Adrenal gland (tissue), 19 donors: ENCODE measurements at regions of chr3 and their contacts with region 1.

Region 1: GRCh38 chr3:42961633-42962032 is 17.5 kb upstream of the GASK1A start:
- DNase-seq: peak; percentile 30 to 82 (median 50)
- H3K4me3 ChIP-seq: no peak overlapping the region
- H3K27ac ChIP-seq: no peak overlapping the region
- H3K4me1 ChIP-seq: no peaks in the 10 kb centered on the region
- H3K27me3 ChIP-seq: no peaks in the 10 kb centered on the region
- CTCF ChIP-seq: peak; percentile 49 to 81 (median 73)
- POLR2A ChIP-seq: no peak

Region 2: DNA sequence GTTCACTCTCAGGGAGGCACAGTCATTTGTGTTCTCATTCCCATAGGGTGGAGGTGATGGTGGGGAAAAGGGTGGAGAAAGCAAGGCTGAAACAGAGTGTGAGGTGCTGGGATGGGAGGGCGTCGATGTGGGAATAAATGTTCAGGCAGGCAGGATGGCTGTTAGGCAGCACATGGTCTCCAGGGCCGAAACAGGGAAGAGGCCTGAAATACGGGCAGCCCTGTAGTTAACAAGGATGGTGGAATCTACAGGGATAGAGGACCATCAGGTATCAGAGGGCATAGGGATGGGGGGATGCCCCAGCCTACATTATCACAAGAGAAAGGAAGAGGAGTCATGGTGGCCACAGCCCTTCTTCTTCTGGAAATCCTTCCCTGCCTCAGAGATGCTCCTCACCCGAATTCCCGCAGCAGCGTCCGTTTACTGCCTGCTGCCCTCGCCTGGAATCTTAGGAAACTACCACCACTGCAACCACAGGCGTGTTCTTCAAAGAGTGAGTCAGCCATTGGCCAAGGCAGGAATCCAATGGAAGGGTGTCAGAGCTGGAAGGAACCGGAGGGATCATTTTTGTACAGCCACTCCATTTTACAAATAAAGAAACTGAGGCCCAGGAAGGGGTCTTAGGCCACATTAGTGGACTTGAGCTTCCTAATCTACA is 194.0 kb after region 1 on chr3:
- intact Hi-C with region 1: loop called (anchors 5 kb)
- DNase-seq: peak; percentile 71 to 92 (median 82)
- H3K4me3 ChIP-seq: no peak overlapping the region
- H3K27ac ChIP-seq: no peak overlapping the region
- H3K4me1 ChIP-seq: peaks cover 0 to 16% of the 10 kb centered on the region in 2 donors
- H3K27me3 ChIP-seq: no peaks in the 10 kb centered on the region
- CTCF ChIP-seq: peak; percentile 43 to 81 (median 76)
- POLR2A ChIP-seq: no peak